Transverse colon (tissue), 4 donors: ENCODE measurements at regions of chr1 and their contacts with region 1.

Region 1: GRCh38 chr1:244329591-244330317 is 122.0 kb downstream of the ADSS2 start:
- DNase-seq: no peak
- H3K4me3 ChIP-seq: no peak overlapping the region
- H3K27ac ChIP-seq: no peak overlapping the region
- H3K4me1 ChIP-seq: peaks cover 0 to 6% (median 0%) of the 10 kb centered on the region in 4 donors
- H3K27me3 ChIP-seq: no peaks in the 10 kb centered on the region
- CTCF ChIP-seq: no peak
- EP300 ChIP-seq: no peak
- POLR2A ChIP-seq: no peak

Region 2: DNA sequence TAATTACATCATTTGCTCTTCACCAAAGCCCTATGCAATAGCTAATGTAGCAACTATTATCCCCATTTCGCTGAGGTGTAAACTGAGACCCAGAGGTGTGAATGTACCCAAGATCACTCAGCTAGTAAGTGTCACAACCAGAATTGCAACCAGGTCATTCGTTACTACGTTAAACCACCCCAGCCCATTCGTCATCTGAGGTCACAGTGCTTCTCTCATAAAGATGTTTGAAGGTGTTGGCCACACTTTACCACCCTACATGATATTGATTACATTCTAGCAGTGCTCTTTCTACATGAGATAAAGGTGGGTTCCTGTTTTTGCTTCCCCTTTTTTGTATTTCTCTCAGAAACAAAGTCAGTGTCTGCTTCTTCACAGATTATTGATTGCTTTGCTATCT is 83.4 kb before region 1 on chr1:
- in situ Hi-C with region 1: no loop called
- intact Hi-C with region 1: no loop called
- DNase-seq: no peak
- H3K4me3 ChIP-seq: no peak overlapping the region
- H3K27ac ChIP-seq: no peak overlapping the region
- H3K4me1 ChIP-seq: no peaks in the 10 kb centered on the region
- H3K27me3 ChIP-seq: no peaks in the 10 kb centered on the region
- CTCF ChIP-seq: no peak
- EP300 ChIP-seq: no peak
- POLR2A ChIP-seq: no peak

Region 3: GRCh38 chr1:244319283-244320132 is 10.2 kb before region 1 on chr1:
- in situ Hi-C with region 1: no loop called
- intact Hi-C with region 1: loop called (anchors 2 kb)
- DNase-seq: no peak
- H3K4me3 ChIP-seq: no peak overlapping the region
- H3K27ac ChIP-seq: peak overlapping the region; percentile 20 to 65 (median 36)
- H3K4me1 ChIP-seq: peaks cover 0 to 29% (median 7%) of the 10 kb centered on the region in 4 donors
- H3K27me3 ChIP-seq: no peaks in the 10 kb centered on the region
- CTCF ChIP-seq: no peak
- EP300 ChIP-seq: no peak
- POLR2A ChIP-seq: no peak